Activated CD8-positive, alpha-beta T cell treated with anti-CD3 and anti-CD28 coated beads, Interleukin-2, amount 10 ng/mL, durations not matched to agents 7 days and 5 days (primary cell): ENCODE measurements at regions of chr12 and their contacts with region 1.

Region 1: GRCh38 chr12:442235-442884 is 17.4 kb upstream of the B4GALNT3 start:
- DNase-seq: peak; percentile 55
- ATAC-seq: peak; percentile 36
- H3K4me3 Mint-ChIP-seq: no peak overlapping the region
- H3K27ac Mint-ChIP-seq: no peak overlapping the region
- H3K4me1 Mint-ChIP-seq: no peaks in the 10 kb centered on the region
- H3K27me3 Mint-ChIP-seq: no peaks in the 10 kb centered on the region

Region 2: DNA sequence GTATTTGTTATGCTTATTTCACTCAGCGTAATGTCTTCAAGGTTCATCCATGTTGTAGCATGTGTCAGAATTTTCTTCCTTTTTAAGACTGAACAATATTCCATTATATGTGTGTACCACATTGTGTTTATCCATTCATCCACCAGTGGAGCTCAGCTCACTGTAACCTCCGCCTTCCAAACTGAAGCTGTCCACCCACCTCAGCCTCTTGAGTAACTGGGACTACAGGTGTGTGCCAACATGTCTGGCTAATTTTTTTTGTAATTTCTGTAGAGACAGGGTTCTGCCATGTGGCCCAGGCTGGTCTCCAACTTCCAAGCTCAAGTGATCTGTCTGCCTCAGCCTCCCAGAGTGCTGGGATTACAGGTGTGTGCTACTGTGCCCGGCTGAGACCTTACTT is 19.8 kb before region 1 on chr12:
- CTCF ChIA-PET with region 1: interaction called, 14 read pairs
- POLR2A ChIA-PET with region 1: no interaction called
- DNase-seq: no peak
- ATAC-seq: no peak
- H3K4me3 Mint-ChIP-seq: no peak overlapping the region
- H3K27ac Mint-ChIP-seq: no peak overlapping the region
- H3K4me1 Mint-ChIP-seq: no peaks in the 10 kb centered on the region
- H3K27me3 Mint-ChIP-seq: no peaks in the 10 kb centered on the region

Region 3: DNA sequence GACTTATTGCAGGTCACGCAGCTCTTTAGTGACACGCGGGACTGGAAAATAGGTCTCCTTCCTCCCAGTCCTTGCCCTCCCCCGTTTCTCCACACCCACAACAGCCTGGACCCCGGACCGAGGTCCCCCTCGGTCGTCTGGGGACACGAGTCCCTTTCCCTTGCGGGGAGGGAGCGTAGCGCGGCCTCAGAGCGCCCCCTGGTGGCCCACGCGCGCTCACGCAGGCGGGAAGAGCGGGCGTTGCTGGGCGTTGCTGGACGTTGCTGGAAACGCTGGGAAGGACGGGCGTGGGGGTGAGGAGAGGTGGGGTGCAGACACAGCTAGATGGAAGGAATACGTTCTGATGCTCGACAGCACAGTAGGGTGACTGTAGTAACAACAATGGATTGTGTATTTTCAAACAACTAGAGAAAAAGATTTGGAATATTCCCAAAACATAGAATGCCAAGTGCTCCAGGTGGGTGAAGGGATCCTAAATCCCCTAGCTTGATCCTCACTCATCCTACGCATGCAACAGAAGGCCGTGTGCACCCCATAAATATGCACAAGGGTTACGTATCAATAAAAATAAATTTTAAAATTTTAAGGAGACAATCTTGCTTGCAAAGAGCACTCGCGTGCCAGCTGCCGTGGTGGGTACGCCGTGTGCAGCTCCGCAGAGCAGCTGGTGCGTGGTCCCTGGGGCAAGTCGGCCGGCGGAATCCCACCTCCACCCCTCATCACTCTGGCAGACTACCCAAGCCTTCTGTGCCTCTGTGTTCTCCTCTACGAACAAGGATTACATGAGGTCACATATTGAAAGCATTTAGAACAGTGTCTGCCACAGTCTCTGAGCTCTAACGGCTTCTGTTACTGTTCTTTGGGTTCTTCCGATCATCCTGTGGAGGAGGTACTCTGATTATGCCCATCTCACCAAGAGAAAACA is 104.8 kb after region 1 on chr12:
- CTCF ChIA-PET with region 1: interaction called, 19 read pairs
- POLR2A ChIA-PET with region 1: interaction called, 3 read pairs
- DNase-seq: peak; percentile 76
- ATAC-seq: peak; percentile 82
- H3K4me3 Mint-ChIP-seq: no peak overlapping the region
- H3K27ac Mint-ChIP-seq: no peak overlapping the region
- H3K4me1 Mint-ChIP-seq: peaks cover 50% of the 10 kb centered on the region
- H3K27me3 Mint-ChIP-seq: peaks cover 22% of the 10 kb centered on the region

Region 4: GRCh38 chr12:614411-614970 is 172.1 kb after region 1 on chr12:
- CTCF ChIA-PET with region 1: no interaction called
- POLR2A ChIA-PET with region 1: no interaction called
- DNase-seq: peak; percentile 46
- ATAC-seq: no peak
- H3K4me3 Mint-ChIP-seq: no peak overlapping the region
- H3K27ac Mint-ChIP-seq: no peak overlapping the region
- H3K4me1 Mint-ChIP-seq: peaks cover 72% of the 10 kb centered on the region
- H3K27me3 Mint-ChIP-seq: no peaks in the 10 kb centered on the region